Activated T-helper 2 cell treated with anti-CD3 and anti-CD28 coated beads, Interferon-gamma antibody, Interleukin-2, Interleukin-4, amounts not matched to agents 10 μg/mL and 5 μg/mL and 100 μg/mL, durations not matched to agents 14 hours and 24 hours and 36 hours (primary cell): ENCODE measurements at regions of chr10 and their contacts with region 1.

Region 1: DNA sequence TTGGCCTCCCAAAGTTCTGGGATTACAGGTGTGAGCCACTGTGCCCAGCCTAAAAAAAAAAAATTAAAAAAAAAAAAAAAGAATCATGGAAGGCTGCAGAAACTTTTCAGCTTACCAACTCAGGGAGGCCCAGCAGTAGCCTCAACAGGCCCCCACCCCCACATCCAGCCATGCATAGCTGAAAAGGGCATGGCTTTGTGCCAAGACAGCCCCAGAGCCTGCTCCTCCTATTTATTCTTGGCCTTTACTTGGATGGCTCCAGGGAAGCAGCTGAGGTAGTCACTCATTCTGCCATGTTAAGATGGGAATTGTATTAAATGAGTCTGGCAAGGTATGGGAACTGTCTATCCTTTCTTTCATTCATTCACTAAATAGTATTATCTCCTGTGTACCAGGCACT is 13.7 kb upstream of the CNNM2 start:
- DNase-seq: no peak
- H3K4me3 Mint-ChIP-seq: no peak overlapping the region
- H3K27ac Mint-ChIP-seq: no peak overlapping the region
- H3K4me1 Mint-ChIP-seq: no peaks in the 10 kb centered on the region
- H3K27me3 Mint-ChIP-seq: peaks cover 2% of the 10 kb centered on the region

Region 2: DNA sequence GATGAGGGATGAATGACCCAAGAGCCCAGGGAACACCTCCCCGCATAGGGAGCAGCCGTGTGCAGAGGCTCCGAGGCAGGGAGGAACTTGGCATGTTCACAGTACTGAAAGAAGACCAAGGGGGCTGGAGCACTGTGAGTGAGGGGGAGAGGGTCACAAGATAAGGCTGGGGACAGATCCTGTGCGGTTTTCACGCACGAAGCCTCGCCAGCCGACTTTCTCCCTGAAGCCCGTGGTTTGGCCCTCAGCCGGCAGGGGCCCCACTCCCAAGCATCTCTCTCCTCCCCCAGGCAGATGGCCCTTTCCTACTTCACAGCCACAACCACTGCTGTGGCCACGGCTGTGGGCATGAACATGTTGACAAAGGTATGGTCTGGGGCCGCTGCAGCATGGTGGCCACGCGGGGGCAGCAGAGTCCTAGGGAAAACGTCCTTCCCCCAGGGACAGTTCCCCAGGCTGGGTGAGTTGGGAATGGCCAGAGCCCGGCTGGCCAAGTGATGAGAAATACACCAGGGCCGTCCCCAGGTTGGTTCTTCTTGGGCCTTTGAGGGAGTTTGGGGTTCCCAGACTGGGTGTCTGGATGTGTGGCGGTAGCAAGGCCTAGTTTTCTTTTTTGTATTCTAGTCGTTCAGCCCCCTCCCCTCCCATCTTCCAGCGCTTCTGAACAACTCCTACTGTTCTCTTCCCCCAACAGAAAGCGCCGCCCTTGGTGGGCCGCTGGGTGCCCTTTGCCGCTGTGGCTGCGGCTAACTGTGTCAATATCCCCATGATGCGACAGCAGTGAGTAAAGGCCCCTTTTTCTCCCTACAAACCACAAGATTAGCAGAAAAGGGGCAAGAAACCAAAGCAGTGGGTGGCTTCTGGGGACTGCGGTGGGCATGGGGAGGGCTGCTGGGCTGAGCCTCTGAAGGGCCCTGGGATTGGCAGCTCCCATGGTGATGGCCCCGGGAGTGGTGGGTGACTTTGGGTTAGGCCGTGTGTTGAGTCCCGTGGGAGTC is 175.0 kb before region 1 on chr10:
- intact Hi-C with region 1: loop called (anchors 2 kb)
- DNase-seq: peak; percentile 39
- H3K4me3 Mint-ChIP-seq: no peak overlapping the region
- H3K27ac Mint-ChIP-seq: peak overlapping the region; percentile 24
- H3K4me1 Mint-ChIP-seq: peaks cover 6% of the 10 kb centered on the region
- H3K27me3 Mint-ChIP-seq: no peaks in the 10 kb centered on the region

Region 3: GRCh38 chr10:102835007-102835482 is 69.3 kb before region 1 on chr10:
- intact Hi-C with region 1: loop called (anchors 1 kb)
- DNase-seq: peak; percentile 58
- H3K4me3 Mint-ChIP-seq: no peak overlapping the region
- H3K27ac Mint-ChIP-seq: no peak overlapping the region
- H3K4me1 Mint-ChIP-seq: peaks cover 5% of the 10 kb centered on the region
- H3K27me3 Mint-ChIP-seq: peaks cover 11% of the 10 kb centered on the region

Region 4: DNA sequence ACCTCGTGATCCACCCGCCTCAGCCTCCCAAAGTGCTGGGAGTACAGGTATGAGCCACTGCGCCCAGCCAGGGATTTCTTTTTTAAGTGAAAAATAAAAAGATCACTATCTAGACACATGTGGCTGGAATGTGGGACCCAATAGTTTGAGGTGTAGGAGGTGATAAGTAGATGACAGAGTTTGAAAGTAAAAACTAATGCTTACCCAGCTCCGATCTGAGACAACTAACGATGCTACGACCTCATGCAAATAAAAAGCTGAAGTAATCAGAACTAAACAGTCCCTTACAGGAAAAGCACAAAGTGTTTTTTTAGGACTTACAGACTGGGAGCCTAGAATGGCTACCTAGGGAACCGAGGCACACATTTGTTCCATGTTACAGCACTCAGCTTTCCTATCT is 423.6 kb after region 1 on chr10:
- intact Hi-C with region 1: no loop called
- DNase-seq: no peak
- H3K4me3 Mint-ChIP-seq: no peak overlapping the region
- H3K27ac Mint-ChIP-seq: no peak overlapping the region
- H3K4me1 Mint-ChIP-seq: peaks cover 2% of the 10 kb centered on the region
- H3K27me3 Mint-ChIP-seq: no peaks in the 10 kb centered on the region